Activated B cell treated with CpG ODN at 0.5 μM for 24 hours (primary cell): ENCODE measurements at regions of chr7 and their contacts with region 1.

Region 1: GRCh38 chr7:55572378-55573233 is at the start of gene VOPP1:
- DNase-seq: peak; percentile 79
- ATAC-seq: peak; percentile 63
- H3K4me3 Mint-ChIP-seq: peak within 1 kb of the TSS; percentile 97
- H3K27ac Mint-ChIP-seq: peak within 1 kb of the TSS; percentile 93
- H3K4me1 Mint-ChIP-seq: peaks cover 49% of the 10 kb centered on the region
- H3K27me3 Mint-ChIP-seq: no peaks in the 10 kb centered on the region
- CTCF ChIP-seq: no peak
- total RNA-seq, gene VOPP1: 403 and 438 TPM in 2 replicates

Region 2: GRCh38 chr7:55296070-55296469 is 276.5 kb before region 1 on chr7:
- CTCF ChIA-PET with region 1: no interaction called
- POLR2A ChIA-PET with region 1: interaction called, 14 read pairs
- intact Hi-C with region 1: no loop called
- DNase-seq: no peak
- ATAC-seq: no peak
- H3K4me3 Mint-ChIP-seq: no peak overlapping the region
- H3K27ac Mint-ChIP-seq: no peak overlapping the region
- H3K4me1 Mint-ChIP-seq: no peaks in the 10 kb centered on the region
- H3K27me3 Mint-ChIP-seq: peaks cover 24% of the 10 kb centered on the region
- CTCF ChIP-seq: no peak

Region 3: DNA sequence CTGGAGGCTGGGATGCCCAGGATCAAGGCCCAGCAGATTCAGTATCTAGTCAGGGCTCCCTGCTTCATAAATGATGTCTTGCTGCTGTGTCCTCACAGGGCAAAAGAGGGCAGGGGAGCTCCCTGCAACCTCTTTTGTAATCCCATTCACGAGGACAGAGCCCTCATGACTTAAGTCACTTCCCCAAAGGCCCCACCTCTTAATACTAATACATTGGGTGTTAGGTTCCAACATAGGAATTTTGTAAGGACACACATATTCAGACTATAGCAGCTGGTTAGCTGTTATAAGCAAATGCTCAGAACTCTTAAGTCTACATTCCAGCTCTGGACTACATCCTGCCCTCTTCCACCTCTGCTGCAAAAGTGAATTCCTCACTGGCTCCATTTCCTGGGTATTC is 63.3 kb before region 1 on chr7:
- CTCF ChIA-PET with region 1: interaction called, 3 read pairs
- POLR2A ChIA-PET with region 1: interaction called, 36 read pairs
- intact Hi-C with region 1: loop called (anchors 2 kb)
- DNase-seq: no peak
- ATAC-seq: no peak
- H3K4me3 Mint-ChIP-seq: peak overlapping the region; percentile 19
- H3K27ac Mint-ChIP-seq: peak overlapping the region; percentile 73
- H3K4me1 Mint-ChIP-seq: peaks cover 88% of the 10 kb centered on the region
- H3K27me3 Mint-ChIP-seq: no peaks in the 10 kb centered on the region
- CTCF ChIP-seq: no peak

Region 4: DNA sequence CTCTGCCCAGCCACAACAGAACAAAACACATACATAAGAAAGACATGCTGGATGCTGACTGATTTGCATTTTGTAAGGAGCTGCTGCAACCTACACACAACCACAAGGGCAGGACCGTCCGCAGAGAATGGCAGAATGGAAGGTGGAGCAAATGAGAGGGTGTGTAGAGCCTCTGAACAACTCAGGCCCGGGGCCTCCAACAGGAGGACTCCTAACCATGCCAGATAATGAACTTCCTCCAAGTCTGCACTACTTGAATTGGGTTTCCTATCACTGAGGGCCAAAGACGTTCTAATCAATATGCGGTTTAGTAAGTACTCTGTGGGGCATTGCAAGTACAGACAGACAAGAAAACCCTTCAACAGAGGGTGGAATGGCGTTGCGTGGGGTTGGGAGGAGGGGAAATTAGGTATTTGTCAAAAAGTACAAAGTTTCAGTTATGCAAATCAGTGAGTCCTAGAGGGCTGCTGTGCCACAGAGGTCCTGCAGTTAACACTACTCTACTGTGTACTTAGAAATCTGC is 14.9 kb before region 1 on chr7:
- CTCF ChIA-PET with region 1: no interaction called
- POLR2A ChIA-PET with region 1: interaction called, 42 read pairs
- intact Hi-C with region 1: loop called (anchors 1 kb)
- DNase-seq: peak; percentile 39
- ATAC-seq: peak; percentile 83
- H3K4me3 Mint-ChIP-seq: peak overlapping the region; percentile 79
- H3K27ac Mint-ChIP-seq: peak overlapping the region; percentile 88
- H3K4me1 Mint-ChIP-seq: peaks cover 97% of the 10 kb centered on the region
- H3K27me3 Mint-ChIP-seq: no peaks in the 10 kb centered on the region
- CTCF ChIP-seq: no peak

Region 5: DNA sequence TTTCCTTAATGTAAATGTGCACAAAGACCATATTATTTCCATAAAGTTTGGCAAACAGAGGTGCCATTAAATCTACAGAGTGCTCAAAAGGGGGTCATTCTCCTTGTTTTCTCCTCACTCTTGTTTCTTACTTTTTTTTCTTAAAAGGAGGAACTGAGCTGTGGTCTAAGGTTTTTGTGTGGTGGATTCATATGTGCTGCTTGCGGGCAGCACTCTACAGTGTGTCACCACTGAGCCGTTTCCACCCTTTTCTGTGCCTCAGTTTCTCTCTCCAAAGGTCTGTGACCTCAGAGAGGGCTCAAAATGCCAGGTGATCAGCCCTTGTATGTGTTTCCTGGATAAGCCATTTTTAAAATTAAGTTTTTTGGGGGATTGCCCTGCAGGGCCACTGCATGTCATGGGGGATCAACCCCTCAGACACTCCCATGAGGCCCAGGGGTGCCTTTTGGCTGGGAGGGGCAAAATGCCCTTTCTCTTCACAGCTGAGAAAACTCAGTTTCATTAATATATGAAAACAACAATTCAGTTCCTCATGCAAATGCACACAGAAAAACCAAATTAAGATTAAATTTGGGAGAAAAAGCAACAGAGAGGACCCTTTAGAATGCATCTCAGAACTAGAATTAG is 56.6 kb after region 1 on chr7:
- CTCF ChIA-PET with region 1: no interaction called
- POLR2A ChIA-PET with region 1: no interaction called
- intact Hi-C with region 1: no loop called
- DNase-seq: no peak
- ATAC-seq: no peak
- H3K4me3 Mint-ChIP-seq: no peak overlapping the region
- H3K27ac Mint-ChIP-seq: no peak overlapping the region
- H3K4me1 Mint-ChIP-seq: peaks cover 8% of the 10 kb centered on the region
- H3K27me3 Mint-ChIP-seq: peaks cover 2% of the 10 kb centered on the region
- CTCF ChIP-seq: no peak

Region 6: GRCh38 chr7:56051339-56052191 is 479.0 kb after region 1 on chr7 and contains the starts of genes CCT6A and PSPH:
- CTCF ChIA-PET with region 1: no interaction called
- POLR2A ChIA-PET with region 1: no interaction called
- intact Hi-C with region 1: no loop called
- DNase-seq: peak; percentile 88
- ATAC-seq: peak; percentile 90
- H3K4me3 Mint-ChIP-seq: peak within 1 kb of the TSS; percentile 88
- H3K27ac Mint-ChIP-seq: peak within 1 kb of the TSS; percentile 88
- H3K4me1 Mint-ChIP-seq: peaks cover 27% of the 10 kb centered on the region
- H3K27me3 Mint-ChIP-seq: no peaks in the 10 kb centered on the region
- CTCF ChIP-seq: no peak
- total RNA-seq, gene CCT6A: 149 and 158 TPM in 2 replicates
- total RNA-seq, gene PSPH: 7.9 and 9.0 TPM in 2 replicates

Region 7: GRCh38 chr7:56063882-56064625 is 491.4 kb after region 1 on chr7 and contains the start of gene SUMF2:
- CTCF ChIA-PET with region 1: no interaction called
- POLR2A ChIA-PET with region 1: interaction called, 13 read pairs
- intact Hi-C with region 1: loop called (anchors 10 kb)
- DNase-seq: peak; percentile 91
- ATAC-seq: peak; percentile 92
- H3K4me3 Mint-ChIP-seq: peak within 1 kb of the TSS; percentile 92
- H3K27ac Mint-ChIP-seq: peak within 1 kb of the TSS; percentile 85
- H3K4me1 Mint-ChIP-seq: peaks cover 32% of the 10 kb centered on the region
- H3K27me3 Mint-ChIP-seq: no peaks in the 10 kb centered on the region
- CTCF ChIP-seq: no peak
- total RNA-seq, gene SUMF2: 91.1 and 103 TPM in 2 replicates